ENCODE measurements at regions of chr6 and their contacts with region 1.

Region 1: GRCh38 chr6:143510991-143511891 is at the start of gene FUCA2:
- DNase-seq: peak; percentile 84
- H3K4me3 Mint-ChIP-seq: peak within 1 kb of the TSS; percentile 91
- H3K27ac Mint-ChIP-seq: peak within 1 kb of the TSS; percentile 93
- H3K4me1 Mint-ChIP-seq: peaks cover 28% of the 10 kb centered on the region
- H3K27me3 Mint-ChIP-seq: no peaks in the 10 kb centered on the region
- total RNA-seq, gene FUCA2: 16.5 to 16.8 TPM

Region 2: GRCh38 chr6:143394389-143394788 is 116.9 kb before region 1 on chr6:
- CTCF ChIA-PET with region 1: no interaction called
- POLR2A ChIA-PET with region 1: no interaction called
- intact Hi-C with region 1: no loop called
- DNase-seq: no peak
- H3K4me3 Mint-ChIP-seq: no peak overlapping the region
- H3K27ac Mint-ChIP-seq: no peak overlapping the region
- H3K4me1 Mint-ChIP-seq: peaks cover 6% of the 10 kb centered on the region
- H3K27me3 Mint-ChIP-seq: no peaks in the 10 kb centered on the region

Region 3: GRCh38 chr6:143450453-143451371 is 60.5 kb before region 1 on chr6 and contains the starts of genes ADAT2 and PEX3:
- CTCF ChIA-PET with region 1: interaction called, 5 read pairs
- POLR2A ChIA-PET with region 1: interaction called, 4 read pairs
- intact Hi-C with region 1: loop called (anchors 2 kb)
- DNase-seq: peak; percentile 97
- H3K4me3 Mint-ChIP-seq: peak within 1 kb of the TSS; percentile 88
- H3K27ac Mint-ChIP-seq: peak within 1 kb of the TSS; percentile 91
- H3K4me1 Mint-ChIP-seq: peaks cover 45% of the 10 kb centered on the region
- H3K27me3 Mint-ChIP-seq: no peaks in the 10 kb centered on the region
- total RNA-seq, gene ADAT2: 26.0 to 27.0 TPM
- total RNA-seq, gene PEX3: 19.7 to 21.1 TPM

Region 4: GRCh38 chr6:143536865-143537691 is 25.8 kb after region 1 on chr6:
- CTCF ChIA-PET with region 1: interaction called, 45 read pairs
- POLR2A ChIA-PET with region 1: interaction called, 7 read pairs
- intact Hi-C with region 1: loop called (anchors 1 kb)
- DNase-seq: peak; percentile 73
- H3K4me3 Mint-ChIP-seq: peak overlapping the region; percentile 85
- H3K27ac Mint-ChIP-seq: peak overlapping the region; percentile 80
- H3K4me1 Mint-ChIP-seq: peaks cover 39% of the 10 kb centered on the region
- H3K27me3 Mint-ChIP-seq: no peaks in the 10 kb centered on the region

Region 5: GRCh38 chr6:143575440-143575839 is 64.2 kb after region 1 on chr6:
- CTCF ChIA-PET with region 1: interaction called, 14 read pairs
- POLR2A ChIA-PET with region 1: no interaction called
- intact Hi-C with region 1: no loop called
- DNase-seq: peak; percentile 56
- H3K4me3 Mint-ChIP-seq: no peak overlapping the region
- H3K27ac Mint-ChIP-seq: no peak overlapping the region
- H3K4me1 Mint-ChIP-seq: peaks cover 10% of the 10 kb centered on the region
- H3K27me3 Mint-ChIP-seq: no peaks in the 10 kb centered on the region

Region 6: GRCh38 chr6:144013486-144013909 is 502.3 kb after region 1 on chr6:
- CTCF ChIA-PET with region 1: interaction called, 12 read pairs
- POLR2A ChIA-PET with region 1: no interaction called
- intact Hi-C with region 1: loop called (anchors 5 kb)
- DNase-seq: peak; percentile 71
- H3K4me3 Mint-ChIP-seq: no peak overlapping the region
- H3K27ac Mint-ChIP-seq: no peak overlapping the region
- H3K4me1 Mint-ChIP-seq: peaks cover 3% of the 10 kb centered on the region
- H3K27me3 Mint-ChIP-seq: peaks cover 7% of the 10 kb centered on the region